ENCODE measurements at regions of chr1 and their contacts with region 1.

Region 1: DNA sequence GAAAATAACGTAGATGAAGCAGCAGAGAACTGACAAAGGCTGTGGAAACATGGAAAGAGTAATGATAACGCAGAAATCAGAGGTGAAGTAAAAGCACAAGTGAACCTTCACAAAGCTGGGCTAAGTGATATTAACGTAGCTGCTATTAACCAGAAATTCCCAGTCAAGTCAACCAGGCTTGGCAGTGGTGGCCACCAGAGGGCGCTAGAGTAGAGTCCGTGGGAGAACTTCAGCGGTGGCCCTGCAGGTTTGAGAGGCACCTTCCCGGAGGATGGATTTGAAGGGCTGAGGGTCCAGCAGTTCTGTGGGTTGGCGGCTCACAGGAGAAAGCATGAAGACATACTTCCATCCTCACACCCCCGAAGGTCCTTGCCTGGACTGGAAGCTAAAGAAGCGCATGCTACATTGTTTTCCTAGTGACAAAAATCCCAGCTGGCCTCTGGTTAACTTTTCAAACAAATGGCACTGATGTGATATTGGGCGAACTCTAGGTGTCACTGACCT is 81.7 kb upstream of the ZNF648 start:
- DNase-seq: peak; percentile 54 to 78
- ATAC-seq: peak; percentile 87 to 97; a peak in 5 of 6 replicates
- H3K4me3 ChIP-seq: no peak overlapping the region
- H3K27ac ChIP-seq: no peak overlapping the region
- H3K4me1 ChIP-seq: no peaks in the 10 kb centered on the region
- CTCF ChIP-seq: peak; percentile 75
- EP300 ChIP-seq: no peak
- POLR2A ChIP-seq: no peak
- RAD21 ChIP-seq: peak; percentile 78 to 85

Region 2: DNA sequence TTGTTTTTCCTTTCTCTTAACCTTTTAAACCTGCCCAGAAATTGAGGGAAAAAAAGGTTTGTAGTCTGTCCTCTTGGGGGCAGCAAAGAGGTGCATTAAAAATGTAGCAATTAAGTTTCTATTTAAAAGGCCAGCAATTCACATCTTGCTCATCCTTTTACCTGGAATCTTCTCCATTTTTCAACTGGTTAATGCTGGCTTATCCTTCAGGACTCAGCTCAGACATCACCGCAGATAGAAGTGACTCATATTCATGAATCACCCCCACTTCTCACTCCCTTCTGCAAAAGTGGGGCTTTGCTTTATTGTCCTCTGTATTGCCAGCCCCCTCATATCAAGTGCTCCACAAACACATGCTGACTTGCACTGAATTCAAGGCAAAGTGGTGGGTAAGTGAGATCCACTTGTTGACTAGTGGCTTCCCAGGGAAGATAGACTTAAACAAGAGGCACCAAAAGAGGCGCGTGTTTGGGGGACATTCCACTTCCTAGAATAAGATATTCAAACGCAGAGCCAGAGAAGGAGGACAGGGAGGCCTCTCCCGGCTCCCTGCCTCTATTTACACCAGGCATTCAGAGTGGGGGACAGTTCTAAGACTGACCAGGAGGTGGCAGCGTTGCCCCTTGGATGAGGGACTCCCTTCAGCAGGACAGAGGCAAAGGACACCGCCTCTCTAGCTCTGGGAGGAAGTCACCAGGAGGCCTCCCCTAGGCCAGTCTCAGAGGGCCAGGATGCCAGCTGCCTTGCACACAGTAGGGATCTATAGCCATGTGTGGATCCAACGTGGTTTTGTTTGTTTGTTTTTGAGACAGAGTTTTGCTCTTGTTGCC is 58.5 kb before region 1 on chr1:
- CTCF ChIA-PET with region 1: interaction called, 27 read pairs
- POLR2A ChIA-PET with region 1: no interaction called
- DNase-seq: peak; percentile 68 to 74
- ATAC-seq: peak; percentile 84 to 95
- H3K4me3 ChIP-seq: no peak overlapping the region
- H3K27ac ChIP-seq: no peak overlapping the region
- H3K4me1 ChIP-seq: 0 out of 3 replicates have a peak, but pooled peaks cover 3% of the 10 kb centered on the region
- CTCF ChIP-seq: peak; percentile 72
- EP300 ChIP-seq: no peak
- POLR2A ChIP-seq: no peak
- RAD21 ChIP-seq: peak; percentile 90 to 94

Region 3: GRCh38 chr1:182113879-182114626 is 29.2 kb before region 1 on chr1:
- CTCF ChIA-PET with region 1: interaction called, 18 read pairs
- POLR2A ChIA-PET with region 1: no interaction called
- DNase-seq: no peak
- ATAC-seq: peak in 1 of 2 experiments; percentile 36; a peak in 1 of 6 replicates
- H3K4me3 ChIP-seq: no peak overlapping the region
- H3K27ac ChIP-seq: no peak overlapping the region
- H3K4me1 ChIP-seq: no peaks in the 10 kb centered on the region
- CTCF ChIP-seq: no peak
- EP300 ChIP-seq: no peak
- POLR2A ChIP-seq: no peak
- RAD21 ChIP-seq: no peak

Region 4: GRCh38 chr1:182120411-182121239 is 22.6 kb before region 1 on chr1:
- CTCF ChIA-PET with region 1: interaction called, 18 read pairs
- POLR2A ChIA-PET with region 1: no interaction called
- DNase-seq: peak; percentile 62 to 83
- ATAC-seq: peak; percentile 88 to 91
- H3K4me3 ChIP-seq: no peak overlapping the region
- H3K27ac ChIP-seq: peak overlapping the region; percentile 67 to 76; a peak in 5 of 6 replicates
- H3K4me1 ChIP-seq: peaks cover 30% of the 10 kb centered on the region
- CTCF ChIP-seq: no peak
- EP300 ChIP-seq: peak; percentile 37 to 44; a peak in 2 of 5 replicates
- POLR2A ChIP-seq: no peak
- RAD21 ChIP-seq: peak in 1 of 2 experiments; percentile 17; a peak in 1 of 5 replicates

Region 5: GRCh38 chr1:182129398-182129797 is 13.8 kb before region 1 on chr1:
- CTCF ChIA-PET with region 1: interaction called, 64 read pairs
- POLR2A ChIA-PET with region 1: no interaction called
- DNase-seq: no peak
- ATAC-seq: no peak
- H3K4me3 ChIP-seq: no peak overlapping the region
- H3K27ac ChIP-seq: no peak overlapping the region
- H3K4me1 ChIP-seq: no peaks in the 10 kb centered on the region
- CTCF ChIP-seq: no peak
- EP300 ChIP-seq: no peak
- POLR2A ChIP-seq: no peak
- RAD21 ChIP-seq: no peak

Region 6: GRCh38 chr1:182391362-182392044 is 248.3 kb after region 1 on chr1 and contains the start of gene GLUL:
- CTCF ChIA-PET with region 1: interaction called, 128 read pairs
- POLR2A ChIA-PET with region 1: interaction called, 13 read pairs
- DNase-seq: peak; percentile 58 to 62
- ATAC-seq: peak; percentile 87 to 96
- H3K4me3 ChIP-seq: peak within 1 kb of the TSS; percentile 60
- H3K27ac ChIP-seq: peak within 1 kb of the TSS; percentile 69 to 83
- H3K4me1 ChIP-seq: peaks cover 5% of the 10 kb centered on the region; the same call in 1 of the 3 replicates
- CTCF ChIP-seq: no peak
- EP300 ChIP-seq: no peak
- POLR2A ChIP-seq: peak; percentile 77
- RAD21 ChIP-seq: no peak
- polyA plus RNA-seq, gene GLUL: 33.0 and 41.7 TPM in 2 replicates

Region 7: DNA sequence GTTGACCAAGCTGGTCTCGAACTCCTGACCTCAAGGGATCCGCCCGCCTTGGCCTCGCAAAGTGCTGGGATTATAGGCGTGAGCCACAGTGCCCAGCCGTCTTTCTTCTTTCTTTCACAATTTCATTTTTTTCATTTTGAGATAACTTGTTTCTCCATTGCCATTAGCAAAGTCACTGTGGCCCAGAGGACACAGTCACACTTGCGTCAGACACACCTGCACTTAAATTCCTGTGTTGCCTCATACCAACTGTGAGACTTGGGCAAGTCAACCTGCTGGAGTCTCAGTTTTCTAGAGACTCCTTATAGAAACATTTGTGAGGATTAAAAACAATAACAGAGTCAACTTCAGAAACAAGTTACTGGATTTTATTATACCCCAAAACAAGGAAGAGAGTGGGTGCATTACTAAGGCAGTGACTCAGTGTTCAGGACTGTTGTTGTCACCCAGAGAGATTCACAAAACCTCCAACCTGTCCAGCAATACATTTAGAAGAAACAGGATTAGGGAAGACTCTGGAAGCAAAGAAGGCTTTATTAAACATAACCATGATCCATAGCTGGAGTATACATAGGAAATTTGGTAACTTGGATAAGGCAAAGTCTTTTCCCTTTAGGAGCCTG is 254.7 kb after region 1 on chr1:
- CTCF ChIA-PET with region 1: interaction called, 128 read pairs
- POLR2A ChIA-PET with region 1: interaction called, 13 read pairs
- DNase-seq: no peak
- ATAC-seq: no peak
- H3K4me3 ChIP-seq: no peak overlapping the region
- H3K27ac ChIP-seq: no peak overlapping the region
- H3K4me1 ChIP-seq: no peaks in the 10 kb centered on the region
- CTCF ChIP-seq: no peak
- EP300 ChIP-seq: no peak
- POLR2A ChIP-seq: no peak
- RAD21 ChIP-seq: no peak